ENCODE measurements at regions of chr22 and their contacts with region 1.

Region 1: DNA sequence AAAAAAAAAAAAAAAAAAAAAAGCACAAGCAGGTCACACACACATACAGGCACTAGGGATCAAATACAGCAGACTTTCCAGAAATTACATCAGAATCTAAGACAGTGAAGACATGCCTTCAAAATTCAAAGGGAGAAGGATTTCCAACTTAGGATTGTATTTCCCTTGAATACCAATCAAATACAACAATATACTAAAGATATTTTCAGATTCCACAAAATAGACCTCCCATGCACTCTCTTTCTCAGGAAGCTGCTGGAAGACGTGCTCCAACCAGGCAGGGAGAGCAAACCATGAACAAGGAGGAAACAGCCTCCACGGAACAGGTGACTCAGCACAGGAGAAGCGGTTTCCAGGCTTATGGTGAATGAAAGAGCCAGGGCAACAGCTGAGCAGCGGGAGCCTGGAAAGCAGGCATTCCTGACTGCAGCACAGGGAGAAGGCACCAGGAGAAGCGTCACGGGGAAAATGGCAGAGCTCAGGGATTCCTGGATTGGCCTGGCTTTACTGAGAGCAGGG is 32.0 kb downstream of the TMEM184B start:
- DNase-seq: no peak
- H3K4me3 ChIP-seq: no peak overlapping the region
- H3K27ac ChIP-seq: no peak overlapping the region
- H3K4me1 ChIP-seq: peaks cover 45% of the 10 kb centered on the region
- CTCF ChIP-seq: no peak

Region 2: GRCh38 chr22:38201710-38202436 is 38.9 kb before region 1 on chr22 and contains the start of gene MAFF:
- CTCF ChIA-PET with region 1: no interaction called
- POLR2A ChIA-PET with region 1: no interaction called
- intact Hi-C with region 1: loop called (anchors 5 kb)
- DNase-seq: peak; percentile 94
- H3K4me3 ChIP-seq: peak within 1 kb of the TSS; percentile 79
- H3K27ac ChIP-seq: peak within 1 kb of the TSS; percentile 18
- H3K4me1 ChIP-seq: peaks cover 47% of the 10 kb centered on the region
- CTCF ChIP-seq: no peak
- total RNA-seq, gene MAFF: 3.8 and 5.7 TPM in 2 replicates

Region 3: DNA sequence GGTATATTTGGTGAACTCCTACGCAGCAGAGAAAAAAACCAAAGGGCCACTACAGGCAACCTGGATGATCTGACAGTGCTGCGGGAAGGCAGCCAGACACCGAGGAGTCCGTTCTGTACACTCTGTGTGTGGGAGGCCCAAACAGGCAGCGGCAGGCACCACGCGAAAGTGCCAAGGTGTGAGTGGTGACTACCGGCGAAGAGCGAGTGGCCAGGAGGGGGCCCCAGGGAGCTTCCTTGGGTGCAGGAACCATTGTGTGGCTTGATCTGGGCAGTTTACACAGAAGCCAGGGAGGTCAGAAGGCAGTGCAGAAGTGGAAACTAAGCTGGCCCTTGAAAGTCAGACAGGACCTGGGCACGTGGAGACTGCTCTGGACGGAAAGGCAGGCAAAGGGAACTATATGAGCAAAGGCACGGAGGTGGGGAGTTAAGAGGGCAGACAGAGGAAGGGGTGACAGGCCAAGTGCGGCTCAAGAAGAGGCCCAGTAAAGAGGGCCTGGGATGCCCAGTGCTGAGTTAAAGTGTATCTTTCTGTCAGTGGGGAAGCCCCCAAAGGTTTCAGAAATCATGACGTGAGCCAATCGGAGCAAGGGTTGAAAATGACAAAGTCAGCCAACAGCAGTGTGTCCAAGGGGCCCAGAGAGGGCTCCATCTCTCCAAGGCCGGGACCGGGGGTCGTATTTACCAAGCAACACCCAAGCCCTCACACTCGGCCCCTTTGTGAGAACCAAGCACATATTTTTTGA is 21.4 kb after region 1 on chr22:
- CTCF ChIA-PET with region 1: no interaction called
- POLR2A ChIA-PET with region 1: interaction called, 6 read pairs
- intact Hi-C with region 1: loop called (anchors 2 kb)
- DNase-seq: peak; percentile 64
- H3K4me3 ChIP-seq: no peak overlapping the region
- H3K27ac ChIP-seq: peak overlapping the region; percentile 29
- H3K4me1 ChIP-seq: peaks cover 67% of the 10 kb centered on the region
- CTCF ChIP-seq: peak; percentile 86

Region 4: DNA sequence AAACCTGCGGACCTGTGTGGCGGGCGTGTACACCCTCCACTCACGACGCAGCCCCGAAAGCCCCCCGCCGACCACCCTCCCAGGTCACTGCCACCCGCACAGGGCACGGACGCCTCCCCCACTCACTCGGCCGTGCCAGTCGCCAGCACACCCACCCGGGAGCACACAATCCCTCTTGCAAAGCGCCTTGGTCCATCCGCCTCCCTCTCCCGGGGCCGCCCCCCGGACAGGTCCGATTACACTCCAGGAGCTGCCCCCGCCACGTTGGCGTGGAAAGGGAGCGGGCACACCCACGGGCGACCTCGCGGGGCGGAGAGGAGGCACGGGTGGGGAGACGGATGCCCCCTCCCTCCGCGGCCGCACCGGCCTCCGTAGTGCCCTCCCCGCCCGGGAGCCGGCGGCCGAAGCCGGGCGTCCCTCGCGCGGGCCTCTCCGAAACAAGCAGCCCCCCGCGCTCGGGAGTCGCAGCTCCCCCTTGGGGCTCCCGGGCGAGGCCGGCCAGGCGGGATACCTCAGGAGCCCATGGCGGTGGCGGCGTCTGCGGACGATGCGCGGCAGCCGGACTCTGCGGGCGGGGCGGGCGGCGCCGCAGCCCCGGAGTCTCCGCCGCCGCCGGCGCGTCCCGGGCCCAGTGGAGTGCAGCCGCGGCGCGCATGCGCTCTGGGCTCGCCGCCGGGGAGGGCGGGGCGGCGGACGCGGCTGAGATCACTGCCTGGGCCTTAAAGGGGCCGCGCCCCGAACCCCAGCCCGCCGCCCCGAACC is 31.8 kb after region 1 on chr22 and contains the start of gene TMEM184B:
- CTCF ChIA-PET with region 1: no interaction called
- POLR2A ChIA-PET with region 1: no interaction called
- intact Hi-C with region 1: loop called (anchors 1 kb)
- DNase-seq: peak; percentile 83
- H3K4me3 ChIP-seq: peak within 1 kb of the TSS; percentile 87
- H3K27ac ChIP-seq: peak within 1 kb of the TSS; percentile 49
- H3K4me1 ChIP-seq: peaks cover 75% of the 10 kb centered on the region
- CTCF ChIP-seq: no peak
- total RNA-seq, gene TMEM184B: 11.1 and 19.1 TPM in 2 replicates

Measured in OCI-LY7 (cell line).